Left ventricle myocardium inferior (tissue), 1 donor: ENCODE measurements at regions of chr1 and their contacts with region 1.

Region 1: GRCh38 chr1:147627435-147628110 is 42.8 kb downstream of the ACP6 start:
- DNase-seq: peak; percentile 35
- H3K4me3 ChIP-seq: no peak overlapping the region
- H3K27ac ChIP-seq: no peak overlapping the region
- H3K4me1 ChIP-seq: no peaks in the 10 kb centered on the region
- H3K27me3 ChIP-seq: no peaks in the 10 kb centered on the region
- CTCF ChIP-seq: peak; percentile 94

Region 2: GRCh38 chr1:147494998-147495580 is 132.5 kb before region 1 on chr1:
- intact Hi-C with region 1: loop called (anchors 5 kb)
- DNase-seq: peak; percentile 56
- H3K4me3 ChIP-seq: no peak overlapping the region
- H3K27ac ChIP-seq: no peak overlapping the region
- H3K4me1 ChIP-seq: peaks cover 24% of the 10 kb centered on the region
- H3K27me3 ChIP-seq: no peaks in the 10 kb centered on the region
- CTCF ChIP-seq: peak; percentile 98

Region 3: DNA sequence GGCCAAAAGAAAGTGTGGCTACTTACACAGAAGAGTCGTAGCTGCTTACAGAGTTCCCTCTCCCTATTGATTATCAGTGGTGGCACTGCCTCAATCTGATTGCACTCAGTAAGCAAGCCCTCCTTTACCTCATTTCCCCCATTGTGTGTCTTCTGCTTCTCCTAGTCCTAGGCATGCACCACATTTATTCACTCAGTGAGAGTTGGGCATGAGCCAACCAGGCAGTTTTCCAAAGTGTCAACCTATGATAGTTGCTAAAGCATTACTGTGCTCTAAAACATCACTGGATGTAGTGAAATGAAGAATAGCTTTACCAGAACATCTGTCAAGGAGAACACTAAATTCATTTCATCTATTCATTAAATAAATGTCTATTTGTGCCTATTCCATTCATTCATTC is 113.5 kb after region 1 on chr1:
- intact Hi-C with region 1: no loop called
- DNase-seq: peak; percentile 43
- H3K4me3 ChIP-seq: no peak overlapping the region
- H3K27ac ChIP-seq: peak overlapping the region; percentile 77
- H3K4me1 ChIP-seq: peaks cover 49% of the 10 kb centered on the region
- H3K27me3 ChIP-seq: no peaks in the 10 kb centered on the region
- CTCF ChIP-seq: no peak